Left ventricle myocardium inferior (tissue), 1 donor: ENCODE measurements at regions of chr1 and their contacts with region 1.

Region 1: GRCh38 chr1:157878059-157878458 is 36.5 kb upstream of the CD5L start:
- DNase-seq: no peak
- H3K4me3 ChIP-seq: no peak overlapping the region
- H3K27ac ChIP-seq: no peak overlapping the region
- H3K4me1 ChIP-seq: no peaks in the 10 kb centered on the region
- H3K27me3 ChIP-seq: peaks cover 9% of the 10 kb centered on the region
- CTCF ChIP-seq: peak; percentile 62

Region 2: DNA sequence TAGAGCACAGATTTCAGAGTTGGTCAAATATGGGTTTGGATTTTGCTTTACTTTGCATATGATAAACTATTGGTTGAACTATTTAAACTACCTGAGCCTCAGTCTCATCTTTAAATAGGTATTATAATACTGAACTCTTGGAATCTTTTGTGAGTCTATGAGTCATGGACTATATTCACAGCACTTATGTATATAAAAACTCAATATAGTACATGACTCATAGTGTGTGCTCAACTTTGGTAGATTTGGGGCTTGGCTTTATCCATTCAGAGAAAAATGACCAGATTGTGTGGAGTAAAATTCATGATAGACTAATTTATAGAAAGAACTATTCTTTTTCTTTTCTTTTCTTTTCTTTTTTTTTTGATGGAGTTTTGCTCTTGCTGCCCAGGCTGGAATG is 206.2 kb before region 1 on chr1:
- intact Hi-C with region 1: no loop called
- DNase-seq: no peak
- H3K4me3 ChIP-seq: no peak overlapping the region
- H3K27ac ChIP-seq: no peak overlapping the region
- H3K4me1 ChIP-seq: no peaks in the 10 kb centered on the region
- H3K27me3 ChIP-seq: no peaks in the 10 kb centered on the region
- CTCF ChIP-seq: no peak

Region 3: DNA sequence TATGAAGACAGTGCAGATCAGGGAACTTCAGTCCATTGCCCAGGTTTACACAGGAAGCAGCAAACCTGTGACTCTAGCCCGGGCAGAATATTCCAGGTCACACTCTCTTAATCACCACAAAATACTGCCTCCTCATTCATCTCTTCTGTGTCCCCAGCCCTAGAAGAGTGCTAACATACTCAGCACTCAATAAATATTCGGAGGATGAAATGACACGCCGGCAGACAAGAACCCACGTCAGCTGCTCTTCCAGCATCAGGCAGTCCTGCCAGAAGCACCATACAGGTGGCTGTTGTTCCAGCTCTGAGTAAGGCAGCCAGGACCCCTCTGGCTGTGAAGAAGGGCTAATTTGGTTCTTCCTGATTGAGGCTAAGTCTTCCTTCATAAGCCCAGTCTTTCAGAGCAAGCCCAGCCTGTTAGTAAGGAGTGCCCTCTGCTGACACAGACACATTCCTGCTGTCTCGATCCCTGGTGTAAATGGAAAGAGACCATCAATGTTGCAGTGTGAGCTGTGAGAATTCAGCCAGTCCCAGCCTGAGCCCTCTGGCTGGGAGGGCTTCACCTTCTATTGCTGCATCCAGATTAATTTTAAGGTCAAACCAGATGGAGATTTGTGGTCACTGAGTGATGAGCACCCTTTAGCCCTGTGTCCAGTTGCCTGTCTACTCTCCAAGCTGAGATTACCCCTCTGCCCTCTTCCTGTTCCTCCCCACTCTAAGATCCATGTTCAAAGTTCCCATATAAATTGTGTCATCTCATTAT is 70.4 kb after region 1 on chr1:
- intact Hi-C with region 1: loop called (anchors 5 kb)
- DNase-seq: peak; percentile 33
- H3K4me3 ChIP-seq: no peak overlapping the region
- H3K27ac ChIP-seq: no peak overlapping the region
- H3K4me1 ChIP-seq: no peaks in the 10 kb centered on the region
- H3K27me3 ChIP-seq: peaks cover 27% of the 10 kb centered on the region
- CTCF ChIP-seq: peak; percentile 76